ENCODE measurements at regions of chr13 and their contacts with region 1.

Region 1: DNA sequence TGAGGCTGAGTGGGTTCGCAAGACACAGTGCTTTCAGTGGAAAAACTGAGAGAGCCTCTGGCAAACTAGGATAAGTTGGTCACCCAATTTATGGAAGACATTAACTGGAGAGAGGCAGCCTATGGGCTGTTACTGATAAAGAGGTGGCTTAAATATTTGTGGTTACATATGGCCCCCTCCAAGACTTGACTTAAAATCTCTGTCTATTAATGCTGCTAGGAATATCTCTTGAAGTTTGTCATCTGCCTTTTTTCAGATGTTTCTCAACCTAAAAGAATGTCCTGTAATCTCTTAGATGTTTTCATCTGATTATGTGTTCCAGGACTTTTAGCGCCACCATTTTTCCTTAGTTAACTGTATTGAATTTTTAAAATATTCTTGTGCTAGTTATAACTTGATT is 54.6 kb downstream of the NAA16 start:
- DNase-seq: no peak
- ATAC-seq: no peak
- H3K4me3 ChIP-seq: no peak overlapping the region
- H3K4me3 Mint-ChIP-seq: no peak overlapping the region
- H3K27ac ChIP-seq: no peak overlapping the region
- H3K27ac Mint-ChIP-seq: no peak overlapping the region
- H3K4me1 ChIP-seq: no peaks in the 10 kb centered on the region
- H3K4me1 Mint-ChIP-seq: peaks cover 38% of the 10 kb centered on the region
- H3K27me3 ChIP-seq: no peaks in the 10 kb centered on the region
- H3K27me3 Mint-ChIP-seq: no peaks in the 10 kb centered on the region
- CTCF ChIP-seq: no peak

Region 2: DNA sequence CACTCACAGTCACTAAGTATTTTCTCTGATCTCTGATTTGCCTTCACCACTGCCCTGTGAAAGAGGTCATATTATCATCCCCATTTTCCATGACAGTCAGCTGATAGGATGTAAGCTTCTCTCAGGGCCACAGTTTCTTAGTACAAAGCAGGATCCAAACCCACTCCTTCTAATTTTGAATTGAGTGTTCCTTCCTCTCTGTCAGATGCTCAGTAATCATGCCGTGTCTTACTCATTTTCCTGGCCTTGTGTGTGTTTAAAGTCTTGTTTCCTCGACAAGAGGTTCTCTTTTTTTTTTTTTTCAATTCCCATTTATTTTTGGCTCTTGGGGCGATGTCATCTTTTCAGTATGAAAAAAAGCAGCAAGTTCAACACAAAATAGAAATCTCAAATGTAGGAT is 17.8 kb after region 1 on chr13:
- CTCF ChIA-PET with region 1: interaction called, 5 read pairs
- POLR2A ChIA-PET with region 1: interaction called, 3 read pairs
- intact Hi-C with region 1: loop called in 1 of 2 experiments (anchors 2 kb)
- DNase-seq: no peak
- ATAC-seq: no peak
- H3K4me3 ChIP-seq: no peak overlapping the region
- H3K4me3 Mint-ChIP-seq: no peak overlapping the region
- H3K27ac ChIP-seq: no peak overlapping the region
- H3K27ac Mint-ChIP-seq: no peak overlapping the region
- H3K4me1 ChIP-seq: no peaks in the 10 kb centered on the region
- H3K4me1 Mint-ChIP-seq: peaks cover 21% of the 10 kb centered on the region
- H3K27me3 ChIP-seq: no peaks in the 10 kb centered on the region
- H3K27me3 Mint-ChIP-seq: no peaks in the 10 kb centered on the region
- CTCF ChIP-seq: no peak

Region 3: GRCh38 chr13:41916173-41916954 is 550.7 kb after region 1 on chr13:
- CTCF ChIA-PET with region 1: no interaction called
- POLR2A ChIA-PET with region 1: no interaction called
- intact Hi-C with region 1: no loop called
- DNase-seq: peak in 2 of 9 experiments; percentile 33 to 59
- ATAC-seq: peak; percentile 65
- H3K4me3 ChIP-seq: no peak overlapping the region
- H3K4me3 Mint-ChIP-seq: peak overlapping the region; percentile 26
- H3K27ac ChIP-seq: peak overlapping the region in 1 of 2 experiments; percentile 31
- H3K27ac Mint-ChIP-seq: peak overlapping the region; percentile 42
- H3K4me1 ChIP-seq: peaks cover 24% of the 10 kb centered on the region
- H3K4me1 Mint-ChIP-seq: peaks cover 47% of the 10 kb centered on the region
- H3K27me3 ChIP-seq: no peaks in the 10 kb centered on the region
- H3K27me3 Mint-ChIP-seq: no peaks in the 10 kb centered on the region
- CTCF ChIP-seq: no peak

Region 4: DNA sequence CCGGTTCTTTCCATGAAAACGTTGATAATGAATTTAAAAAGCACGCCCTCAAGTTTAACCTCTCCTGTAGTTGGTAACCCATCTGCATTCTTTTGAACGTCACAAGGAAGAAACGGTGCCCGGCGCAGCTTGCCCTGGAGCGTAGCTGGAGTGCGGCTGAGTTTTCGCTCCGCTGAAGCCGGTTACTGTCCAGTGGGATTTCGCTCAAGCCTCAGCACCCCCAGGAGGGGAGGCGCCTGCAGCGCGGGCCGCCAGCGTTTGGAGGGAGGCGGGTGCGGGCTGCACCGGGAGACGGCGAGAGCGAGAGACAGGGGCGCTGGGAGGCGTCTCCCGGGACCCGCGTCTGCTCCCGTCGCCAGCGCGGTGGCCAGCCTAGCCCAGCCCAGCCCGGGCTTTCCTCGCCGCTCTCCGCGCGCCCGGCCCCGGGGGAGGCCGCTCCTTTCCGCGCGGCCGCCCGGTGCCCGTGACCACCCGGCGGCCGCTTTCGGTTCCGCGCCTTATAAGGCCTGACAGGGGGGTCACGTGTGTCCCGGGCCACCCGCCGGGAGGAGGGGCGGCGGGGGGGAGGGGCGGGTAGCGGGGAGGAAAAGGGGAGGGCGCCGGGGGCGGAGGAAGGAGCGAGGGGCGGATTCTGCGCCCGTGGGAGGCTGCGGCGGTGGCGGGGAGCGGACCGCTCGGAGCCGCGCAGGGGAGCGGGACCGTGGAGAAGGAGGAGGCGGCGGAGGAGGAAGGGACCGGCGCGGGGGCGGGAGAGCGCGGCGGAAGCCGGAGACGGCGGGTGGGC is 674.5 kb after region 1 on chr13:
- CTCF ChIA-PET with region 1: no interaction called
- POLR2A ChIA-PET with region 1: no interaction called
- intact Hi-C with region 1: loop called in 1 of 2 experiments (anchors 10 kb)
- DNase-seq: peak; percentile 70 to 94 (median 88)
- ATAC-seq: peak; percentile 81
- H3K4me3 ChIP-seq: peak overlapping the region; percentile 47 to 88
- H3K4me3 Mint-ChIP-seq: peak overlapping the region; percentile 91
- H3K27ac ChIP-seq: peak overlapping the region; percentile 23 to 72
- H3K27ac Mint-ChIP-seq: peak overlapping the region; percentile 72
- H3K4me1 ChIP-seq: peaks cover 9% of the 10 kb centered on the region
- H3K4me1 Mint-ChIP-seq: peaks cover 16% of the 10 kb centered on the region
- H3K27me3 ChIP-seq: no peaks in the 10 kb centered on the region
- H3K27me3 Mint-ChIP-seq: no peaks in the 10 kb centered on the region
- CTCF ChIP-seq: no peak